Right cardiac atrium (tissue), 5 donors: ENCODE measurements at regions of chr9 and their contacts with region 1.

Region 1: GRCh38 chr9:99819856-99820684 is 1.6 kb upstream of the NR4A3 start:
- DNase-seq: peak; percentile 96 to 98 (median 98)
- ATAC-seq: peak; percentile 75 to 85
- H3K4me3 ChIP-seq: peak overlapping the region; percentile 74
- H3K27ac ChIP-seq: peak overlapping the region; percentile 96
- H3K4me1 ChIP-seq: no peaks in the 10 kb centered on the region
- H3K27me3 ChIP-seq: no peaks in the 10 kb centered on the region

Region 2: GRCh38 chr9:99184475-99185347 is 635.4 kb before region 1 on chr9:
- intact Hi-C with region 1: loop called in 1 of 4 experiments (anchors 10 kb)
- DNase-seq: peak; percentile 90 to 96 (median 92)
- ATAC-seq: peak; percentile 90 to 91
- H3K4me3 ChIP-seq: no peak overlapping the region
- H3K27ac ChIP-seq: no peak overlapping the region
- H3K4me1 ChIP-seq: no peaks in the 10 kb centered on the region
- H3K27me3 ChIP-seq: no peaks in the 10 kb centered on the region

Region 3: GRCh38 chr9:99356512-99356971 is 463.5 kb before region 1 on chr9:
- intact Hi-C with region 1: loop called in 1 of 4 experiments (anchors 5 kb)
- DNase-seq: peak; percentile 55 to 77 (median 74)
- ATAC-seq: peak; percentile 65 to 76
- H3K4me3 ChIP-seq: no peak overlapping the region
- H3K27ac ChIP-seq: peak overlapping the region; percentile 90
- H3K4me1 ChIP-seq: peaks cover 2% of the 10 kb centered on the region
- H3K27me3 ChIP-seq: no peaks in the 10 kb centered on the region

Region 4: GRCh38 chr9:99868845-99869244 is 48.8 kb after region 1 on chr9:
- intact Hi-C with region 1: no loop called
- DNase-seq: no peak
- ATAC-seq: no peak
- H3K4me3 ChIP-seq: no peak overlapping the region
- H3K27ac ChIP-seq: no peak overlapping the region
- H3K4me1 ChIP-seq: peaks cover 1% of the 10 kb centered on the region
- H3K27me3 ChIP-seq: no peaks in the 10 kb centered on the region

Region 5: GRCh38 chr9:99906403-99907207 is 86.5 kb after region 1 on chr9 and contains the start of gene STX17:
- intact Hi-C with region 1: loop called in 2 of 4 experiments (anchors 10 kb)
- DNase-seq: peak; percentile 79 to 92 (median 91)
- ATAC-seq: peak; percentile 98
- H3K4me3 ChIP-seq: peak within 1 kb of the TSS; percentile 99
- H3K27ac ChIP-seq: peak within 1 kb of the TSS; percentile 99
- H3K4me1 ChIP-seq: no peaks in the 10 kb centered on the region
- H3K27me3 ChIP-seq: no peaks in the 10 kb centered on the region
- total RNA-seq, gene STX17: 22.1 to 25.5 (median 23.8) TPM

Region 6: GRCh38 chr9:100052375-100052774 is 232.3 kb after region 1 on chr9:
- intact Hi-C with region 1: no loop called
- DNase-seq: no peak
- ATAC-seq: no peak
- H3K4me3 ChIP-seq: no peak overlapping the region
- H3K27ac ChIP-seq: no peak overlapping the region
- H3K4me1 ChIP-seq: no peaks in the 10 kb centered on the region
- H3K27me3 ChIP-seq: no peaks in the 10 kb centered on the region

Region 7: GRCh38 chr9:100098887-100099721 is 279.0 kb after region 1 on chr9 and contains the starts of genes ERP44 and INVS:
- intact Hi-C with region 1: loop called in 1 of 4 experiments (anchors 10 kb)
- DNase-seq: peak; percentile 99
- ATAC-seq: peak; percentile 99 to 100
- H3K4me3 ChIP-seq: peak within 1 kb of the TSS; percentile 75
- H3K27ac ChIP-seq: peak within 1 kb of the TSS; percentile 75
- H3K4me1 ChIP-seq: no peaks in the 10 kb centered on the region
- H3K27me3 ChIP-seq: no peaks in the 10 kb centered on the region
- total RNA-seq, gene ERP44: 13.9 to 19.6 (median 16.9) TPM
- total RNA-seq, gene INVS: 7.9 to 10.1 (median 9.6) TPM